MCF 10A (cell line): ENCODE measurements at regions of chr6 and their contacts with region 1.

Region 1: GRCh38 chr6:18595774-18596530 is 208.8 kb downstream of the RNF144B start:
- DNase-seq: peak; percentile 73
- H3K4me3 Mint-ChIP-seq: no peak overlapping the region
- H3K27ac Mint-ChIP-seq: no peak overlapping the region
- H3K4me1 Mint-ChIP-seq: no peaks in the 10 kb centered on the region
- H3K27me3 Mint-ChIP-seq: peaks cover 41% of the 10 kb centered on the region
- CTCF ChIP-seq: peak; percentile 86

Region 2: DNA sequence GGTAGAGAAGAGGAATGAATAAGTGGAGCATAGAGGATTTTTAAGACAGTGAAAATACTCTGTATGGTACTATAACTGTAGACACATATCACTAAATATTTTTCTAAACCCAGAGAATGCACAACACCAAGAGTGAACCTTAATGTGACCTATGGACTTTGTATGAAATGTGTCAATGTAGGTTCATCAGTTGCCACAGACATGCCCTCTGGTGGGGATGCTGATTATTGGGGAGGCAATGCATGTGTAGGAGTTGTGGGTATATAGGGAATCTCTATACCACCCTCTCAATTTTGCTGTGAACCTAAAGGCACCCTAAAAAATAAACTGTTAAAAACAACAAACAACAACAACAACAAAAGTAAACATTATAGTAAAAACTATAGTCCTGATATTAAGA is 84.9 kb after region 1 on chr6:
- CTCF ChIA-PET with region 1: interaction called, 5 read pairs
- POLR2A ChIA-PET with region 1: no interaction called
- intact Hi-C with region 1: loop called (anchors 1 kb)
- DNase-seq: peak; percentile 21
- H3K4me3 Mint-ChIP-seq: no peak overlapping the region
- H3K27ac Mint-ChIP-seq: no peak overlapping the region
- H3K4me1 Mint-ChIP-seq: no peaks in the 10 kb centered on the region
- H3K27me3 Mint-ChIP-seq: peaks cover 75% of the 10 kb centered on the region
- CTCF ChIP-seq: no peak

Region 3: DNA sequence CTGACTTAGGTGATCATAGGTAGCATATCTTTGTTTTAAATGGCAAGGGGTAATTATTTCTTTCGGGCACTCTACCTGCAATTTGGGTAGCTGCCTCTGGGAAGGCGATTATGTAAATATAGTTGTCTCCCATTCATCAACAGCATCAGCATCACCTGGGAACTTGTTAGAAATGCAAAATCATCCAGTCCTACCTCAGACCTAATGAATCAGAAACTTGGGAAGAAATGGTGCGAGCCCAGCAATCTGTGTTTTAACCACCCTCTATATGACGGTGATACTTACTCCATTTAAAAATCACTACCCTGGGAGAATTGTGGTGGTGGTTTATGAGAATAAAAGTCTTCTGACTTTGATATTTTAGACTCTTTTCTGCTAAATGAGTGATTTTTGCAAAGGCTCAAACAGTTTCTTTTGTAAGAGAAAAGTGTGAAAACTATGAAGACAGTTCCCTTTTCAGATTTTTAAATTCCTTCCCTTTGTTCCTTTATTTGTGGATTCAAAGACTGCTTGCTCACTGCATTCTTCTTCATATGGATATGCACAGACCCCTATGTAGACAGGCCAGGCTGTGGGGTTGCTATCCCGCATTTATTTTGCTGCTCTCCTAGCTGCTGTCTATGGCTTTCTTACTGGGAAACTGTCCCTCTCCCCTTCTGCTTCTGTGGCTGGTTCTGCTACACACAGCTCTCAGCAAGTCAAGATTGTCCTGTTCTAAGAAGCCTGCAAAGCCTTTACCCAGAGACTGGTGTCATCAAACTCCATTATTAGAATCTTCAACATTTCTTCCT is 156.5 kb after region 1 on chr6:
- CTCF ChIA-PET with region 1: interaction called, 8 read pairs
- POLR2A ChIA-PET with region 1: no interaction called
- intact Hi-C with region 1: loop called (anchors 5 kb)
- DNase-seq: no peak
- H3K4me3 Mint-ChIP-seq: no peak overlapping the region
- H3K27ac Mint-ChIP-seq: no peak overlapping the region
- H3K4me1 Mint-ChIP-seq: peaks cover 17% of the 10 kb centered on the region
- H3K27me3 Mint-ChIP-seq: peaks cover 61% of the 10 kb centered on the region
- CTCF ChIP-seq: no peak

Region 4: GRCh38 chr6:18823782-18824386 is 227.9 kb after region 1 on chr6:
- CTCF ChIA-PET with region 1: interaction called, 5 read pairs
- POLR2A ChIA-PET with region 1: no interaction called
- intact Hi-C with region 1: loop called (anchors 2 kb)
- DNase-seq: peak; percentile 56
- H3K4me3 Mint-ChIP-seq: no peak overlapping the region
- H3K27ac Mint-ChIP-seq: no peak overlapping the region
- H3K4me1 Mint-ChIP-seq: no peaks in the 10 kb centered on the region
- H3K27me3 Mint-ChIP-seq: peaks cover 15% of the 10 kb centered on the region
- CTCF ChIP-seq: peak; percentile 62

Region 5: GRCh38 chr6:18985996-18986395 is 390.0 kb after region 1 on chr6:
- CTCF ChIA-PET with region 1: no interaction called
- POLR2A ChIA-PET with region 1: no interaction called
- intact Hi-C with region 1: no loop called
- DNase-seq: no peak
- H3K4me3 Mint-ChIP-seq: no peak overlapping the region
- H3K27ac Mint-ChIP-seq: no peak overlapping the region
- H3K4me1 Mint-ChIP-seq: no peaks in the 10 kb centered on the region
- H3K27me3 Mint-ChIP-seq: peaks cover 12% of the 10 kb centered on the region
- CTCF ChIP-seq: no peak

Region 6: GRCh38 chr6:18997375-18997826 is 401.4 kb after region 1 on chr6:
- CTCF ChIA-PET with region 1: interaction called, 7 read pairs
- POLR2A ChIA-PET with region 1: no interaction called
- intact Hi-C with region 1: loop called (anchors 5 kb)
- DNase-seq: peak; percentile 64
- H3K4me3 Mint-ChIP-seq: no peak overlapping the region
- H3K27ac Mint-ChIP-seq: no peak overlapping the region
- H3K4me1 Mint-ChIP-seq: no peaks in the 10 kb centered on the region
- H3K27me3 Mint-ChIP-seq: peaks cover 61% of the 10 kb centered on the region
- CTCF ChIP-seq: peak; percentile 74

Region 7: DNA sequence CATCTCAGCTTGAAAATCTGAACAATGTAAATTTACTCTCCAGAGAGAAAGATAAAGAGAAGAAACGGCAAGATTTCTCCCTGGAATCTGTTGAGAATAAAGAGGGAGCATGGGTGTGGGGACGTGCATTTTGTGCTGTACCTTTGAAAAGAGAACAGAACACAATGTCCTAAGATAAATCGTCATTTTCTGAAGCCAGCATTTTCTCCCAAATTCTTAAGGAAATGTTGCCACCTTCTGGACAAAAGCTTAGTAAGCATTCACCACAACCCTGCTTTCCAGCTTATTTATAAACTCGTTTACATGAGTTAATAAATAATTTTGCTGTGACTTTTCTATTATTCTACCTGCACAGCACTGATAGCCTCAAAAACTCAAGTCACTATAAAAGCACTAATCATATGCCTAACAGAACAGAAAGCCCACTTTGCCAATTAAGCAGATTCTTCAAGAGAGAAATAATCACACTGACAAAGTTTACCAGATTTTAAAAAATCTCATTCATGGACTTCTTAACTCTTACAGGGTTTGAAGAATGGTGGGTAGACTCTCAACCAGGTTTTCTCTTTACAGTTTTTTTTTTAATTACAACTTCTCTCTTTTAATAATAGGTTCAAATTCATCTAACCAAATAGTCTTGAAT is 1460.5 kb after region 1 on chr6:
- CTCF ChIA-PET with region 1: interaction called, 5 read pairs
- POLR2A ChIA-PET with region 1: no interaction called
- intact Hi-C with region 1: loop called (anchors 1 kb)
- DNase-seq: peak; percentile 48
- H3K4me3 Mint-ChIP-seq: no peak overlapping the region
- H3K27ac Mint-ChIP-seq: no peak overlapping the region
- H3K4me1 Mint-ChIP-seq: no peaks in the 10 kb centered on the region
- H3K27me3 Mint-ChIP-seq: no peaks in the 10 kb centered on the region
- CTCF ChIP-seq: peak; percentile 54